ENCODE measurements at regions of chr1 and their contacts with region 1.

Region 1: GRCh38 chr1:227999056-227999930 is 7.5 kb upstream of the WNT3A start:
- DNase-seq: peak; percentile 3
- H3K4me3 ChIP-seq: no peak overlapping the region
- H3K27me3 ChIP-seq: peaks cover 9% of the 10 kb centered on the region
- CTCF ChIP-seq: peak; percentile 83

Region 2: DNA sequence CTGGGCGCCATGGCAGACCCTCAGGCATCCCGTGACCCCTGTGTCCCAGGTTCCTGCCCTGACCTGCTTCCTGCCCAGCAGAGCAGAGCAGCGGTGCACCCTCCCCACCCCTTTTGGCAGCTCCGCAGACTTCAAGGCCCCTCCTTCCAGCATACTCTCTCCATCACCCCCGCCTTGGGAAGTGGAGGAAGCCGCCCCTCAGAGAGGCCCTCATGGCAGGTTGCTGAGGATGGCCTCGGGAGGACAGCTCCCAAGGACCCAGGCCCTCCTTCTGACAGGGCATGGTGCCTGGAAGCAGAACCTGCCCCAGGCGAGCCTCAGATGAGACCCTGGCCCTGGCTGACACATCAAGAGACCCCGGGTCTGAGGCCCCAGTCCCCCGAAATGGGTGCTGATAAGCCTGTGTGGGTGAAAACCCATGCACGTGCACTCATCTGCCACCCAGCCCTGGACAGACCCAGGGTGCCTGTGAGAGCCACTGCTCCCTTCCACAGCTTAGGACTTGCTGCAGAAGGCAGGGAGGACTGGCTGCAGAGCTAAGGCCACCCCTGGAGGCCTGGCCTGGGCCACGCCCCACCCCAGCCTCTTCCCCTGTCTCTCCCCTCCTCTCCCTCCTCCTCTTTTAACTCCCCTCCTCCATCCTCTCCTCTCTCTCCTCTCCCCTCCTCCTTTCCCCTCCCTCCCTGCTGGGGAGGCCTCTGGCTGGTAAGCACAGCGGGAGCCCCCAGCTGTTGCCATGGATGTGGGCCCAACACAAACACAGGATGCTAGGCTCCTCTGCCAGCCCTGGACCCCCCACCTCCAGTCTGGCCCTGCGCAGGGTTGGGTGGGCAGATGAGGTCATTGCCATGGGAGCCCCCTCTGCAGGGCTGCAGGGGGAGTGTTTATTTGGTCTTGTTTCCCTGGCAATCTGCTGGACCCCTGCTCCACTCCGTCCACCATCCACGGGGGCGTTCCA is 85.2 kb before region 1 on chr1:
- CTCF ChIA-PET with region 1: no interaction called
- POLR2A ChIA-PET with region 1: no interaction called
- DNase-seq: no peak
- H3K4me3 ChIP-seq: no peak overlapping the region
- H3K27me3 ChIP-seq: peaks cover 4% of the 10 kb centered on the region; the same call in 1 of the 2 replicates
- CTCF ChIP-seq: no peak

Region 3: GRCh38 chr1:227987181-227987580 is 12.1 kb before region 1 on chr1:
- CTCF ChIA-PET with region 1: interaction called, 15 read pairs
- POLR2A ChIA-PET with region 1: no interaction called
- DNase-seq: no peak
- H3K4me3 ChIP-seq: no peak overlapping the region
- H3K27me3 ChIP-seq: no peaks in the 10 kb centered on the region
- CTCF ChIP-seq: no peak

Region 4: DNA sequence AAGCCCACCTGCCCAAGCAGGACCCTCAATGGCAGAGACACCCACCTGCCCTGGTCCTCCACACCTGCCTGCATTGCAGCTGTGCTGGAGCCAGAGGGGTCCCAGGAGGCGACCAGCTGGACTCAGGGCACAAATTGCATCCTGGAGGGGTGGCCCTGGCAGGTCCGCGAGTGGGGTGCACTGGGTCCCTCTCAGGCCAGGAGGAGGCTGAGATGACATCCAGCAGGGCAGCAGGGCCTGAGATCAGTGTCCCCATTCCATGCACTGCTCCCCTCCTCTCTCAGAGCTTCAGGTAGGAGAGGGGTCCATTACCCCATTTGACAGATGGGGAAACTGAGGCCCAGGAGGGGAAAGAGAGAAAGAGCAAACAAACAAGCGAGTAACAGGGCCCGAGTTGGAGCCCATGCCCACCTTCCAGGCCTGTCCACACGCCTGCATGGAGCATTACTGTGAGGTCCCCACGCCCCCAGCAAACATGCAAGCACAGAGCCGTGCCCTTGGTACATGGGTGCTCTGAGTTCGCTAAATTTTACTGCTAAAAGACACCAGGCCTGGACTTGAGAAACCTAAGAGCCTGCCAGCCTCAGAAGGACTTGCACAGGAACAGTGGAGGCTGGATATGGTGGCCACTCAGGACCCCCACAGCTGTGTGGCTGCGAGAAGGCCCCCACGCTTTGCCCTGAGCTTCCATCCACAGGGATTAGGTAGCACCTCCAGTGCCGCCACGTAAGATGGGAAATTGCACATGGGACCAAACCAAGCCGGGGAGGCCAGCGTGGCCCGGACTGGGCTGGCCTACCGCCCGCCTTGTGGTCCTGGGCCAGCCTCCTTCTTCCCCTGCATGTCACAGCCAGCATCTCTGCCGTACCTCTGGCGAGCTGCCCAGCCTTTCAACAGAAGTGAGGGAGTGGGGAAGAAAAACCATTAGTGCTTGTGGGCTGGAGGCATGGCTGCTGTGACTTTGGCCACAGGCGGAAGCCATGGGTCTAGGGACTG is 14.9 kb after region 1 on chr1:
- CTCF ChIA-PET with region 1: interaction called, 34 read pairs
- POLR2A ChIA-PET with region 1: no interaction called
- DNase-seq: no peak
- H3K4me3 ChIP-seq: no peak overlapping the region
- H3K27me3 ChIP-seq: peaks cover 11% of the 10 kb centered on the region
- CTCF ChIP-seq: no peak

Region 5: GRCh38 chr1:228076796-228077430 is 77.6 kb after region 1 on chr1:
- CTCF ChIA-PET with region 1: interaction called, 12 read pairs
- POLR2A ChIA-PET with region 1: no interaction called
- DNase-seq: no peak
- H3K4me3 ChIP-seq: no peak overlapping the region
- H3K27me3 ChIP-seq: no peaks in the 10 kb centered on the region
- CTCF ChIP-seq: no peak